Keratinocyte (primary cell): ENCODE measurements at regions of chr2 and their contacts with region 1.

Region 1: DNA sequence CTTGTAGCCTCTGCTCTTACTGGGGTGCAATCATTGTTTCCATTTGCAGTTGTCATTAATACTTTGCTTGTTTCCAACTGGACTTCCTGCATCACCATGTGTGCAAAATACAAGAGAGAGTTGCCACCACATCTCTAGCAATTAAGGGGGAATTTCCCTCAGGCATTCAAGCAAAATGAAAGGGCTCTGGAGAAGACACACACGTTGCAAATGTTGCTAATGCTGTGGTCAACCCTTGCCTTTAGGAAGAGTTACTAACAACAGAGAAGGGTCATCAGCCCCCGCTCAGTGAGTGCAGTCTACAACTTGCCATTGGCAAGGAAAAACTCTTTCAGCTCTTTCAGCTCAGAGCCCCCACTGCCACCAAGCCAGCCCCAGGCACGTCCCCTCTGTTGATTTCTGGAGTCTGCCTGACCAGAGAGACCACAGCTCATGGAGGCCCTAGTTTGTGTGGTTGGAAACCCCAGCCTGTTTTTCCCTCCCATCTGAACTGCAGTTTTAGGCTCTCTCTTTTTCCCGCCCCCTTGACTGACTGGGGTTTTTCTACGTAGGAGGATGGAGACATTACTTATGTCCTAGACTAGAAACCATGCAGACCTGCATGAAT is 25.9 kb upstream of the GPR45 start:
- DNase-seq: no peak
- H3K4me3 ChIP-seq: no peak overlapping the region
- H3K27ac ChIP-seq: no peak overlapping the region
- H3K4me1 ChIP-seq: no peaks in the 10 kb centered on the region
- H3K27me3 ChIP-seq: no peaks in the 10 kb centered on the region
- CTCF ChIP-seq: no peak

Region 2: DNA sequence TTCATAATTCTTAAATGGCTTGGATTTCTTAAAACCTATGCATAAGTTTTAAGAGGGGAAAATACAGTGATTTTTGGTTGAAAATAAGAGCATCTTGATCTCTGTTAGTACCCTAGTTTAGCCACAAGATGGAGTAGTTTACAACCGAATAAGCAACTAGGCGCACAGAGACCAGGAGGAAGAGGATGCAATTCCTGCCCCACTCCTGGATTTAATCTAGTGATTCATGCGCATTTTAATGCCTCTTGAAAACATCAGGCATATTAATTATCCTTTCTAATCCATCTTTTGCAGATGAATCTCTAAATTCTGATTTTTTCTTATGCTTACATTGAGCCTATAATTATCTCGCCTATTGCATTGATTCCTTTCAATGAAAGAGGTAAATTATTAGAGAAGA is 101.1 kb before region 1 on chr2:
- dilution Hi-C with region 1: loop called (anchors 25 kb)
- DNase-seq: peak; percentile 32
- H3K4me3 ChIP-seq: no peak overlapping the region
- H3K27ac ChIP-seq: no peak overlapping the region
- H3K4me1 ChIP-seq: no peaks in the 10 kb centered on the region
- H3K27me3 ChIP-seq: no peaks in the 10 kb centered on the region
- CTCF ChIP-seq: peak; percentile 57 to 66 (median 58)